Panc1 (cell line): ENCODE measurements at regions of chr16 and their contacts with region 1.

Region 1: GRCh38 chr16:4625560-4626159 is 1.0 kb downstream of the MGRN1 start:
- DNase-seq: no peak
- ATAC-seq: no peak
- H3K4me3 ChIP-seq: peak overlapping the region; percentile 84 to 92
- H3K27ac ChIP-seq: peak overlapping the region; percentile 68
- H3K4me1 ChIP-seq: peaks cover 6% of the 10 kb centered on the region
- H3K27me3 ChIP-seq: no peaks in the 10 kb centered on the region
- CTCF ChIP-seq: no peak

Region 2: DNA sequence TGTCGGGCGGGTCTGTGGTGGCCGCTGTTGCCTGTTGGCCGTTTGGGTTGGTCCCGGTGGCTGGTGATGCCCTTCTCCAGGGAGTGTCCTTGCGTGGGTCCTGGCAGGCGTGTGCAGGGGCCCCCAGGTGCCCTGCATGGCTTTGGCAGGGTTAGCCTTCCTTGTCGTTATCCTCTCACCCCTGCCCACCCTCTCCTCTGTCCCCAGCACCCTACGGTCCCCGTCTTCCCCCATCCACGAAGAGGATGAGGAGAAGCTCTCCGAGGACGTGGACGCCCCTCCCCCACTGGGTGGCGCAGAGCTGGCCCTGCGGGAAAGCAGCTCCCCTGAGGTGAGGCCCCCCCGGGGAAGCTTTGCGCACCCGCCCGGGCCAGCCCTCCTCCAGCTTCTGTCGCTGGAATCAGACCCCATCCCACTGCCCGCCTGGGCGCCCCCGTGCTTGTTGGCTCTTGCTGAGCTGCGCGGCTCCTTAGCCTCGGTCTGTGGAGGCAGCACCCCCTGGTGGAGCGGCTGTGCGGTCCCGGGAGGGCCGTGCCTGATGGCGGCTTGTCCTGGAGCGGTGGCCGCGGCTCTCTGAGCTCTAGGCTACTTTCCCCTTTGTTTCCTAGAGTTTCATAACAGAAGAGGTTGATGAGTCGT is 57.1 kb after region 1 on chr16:
- CTCF ChIA-PET with region 1: no interaction called
- POLR2A ChIA-PET with region 1: no interaction called
- in situ Hi-C with region 1: no loop called
- intact Hi-C with region 1: no loop called
- DNase-seq: no peak
- ATAC-seq: peak; percentile 63
- H3K4me3 ChIP-seq: no peak overlapping the region
- H3K27ac ChIP-seq: no peak overlapping the region
- H3K4me1 ChIP-seq: no peaks in the 10 kb centered on the region
- H3K27me3 ChIP-seq: no peaks in the 10 kb centered on the region
- CTCF ChIP-seq: no peak; the same call in 1 of the 2 replicates

Region 3: DNA sequence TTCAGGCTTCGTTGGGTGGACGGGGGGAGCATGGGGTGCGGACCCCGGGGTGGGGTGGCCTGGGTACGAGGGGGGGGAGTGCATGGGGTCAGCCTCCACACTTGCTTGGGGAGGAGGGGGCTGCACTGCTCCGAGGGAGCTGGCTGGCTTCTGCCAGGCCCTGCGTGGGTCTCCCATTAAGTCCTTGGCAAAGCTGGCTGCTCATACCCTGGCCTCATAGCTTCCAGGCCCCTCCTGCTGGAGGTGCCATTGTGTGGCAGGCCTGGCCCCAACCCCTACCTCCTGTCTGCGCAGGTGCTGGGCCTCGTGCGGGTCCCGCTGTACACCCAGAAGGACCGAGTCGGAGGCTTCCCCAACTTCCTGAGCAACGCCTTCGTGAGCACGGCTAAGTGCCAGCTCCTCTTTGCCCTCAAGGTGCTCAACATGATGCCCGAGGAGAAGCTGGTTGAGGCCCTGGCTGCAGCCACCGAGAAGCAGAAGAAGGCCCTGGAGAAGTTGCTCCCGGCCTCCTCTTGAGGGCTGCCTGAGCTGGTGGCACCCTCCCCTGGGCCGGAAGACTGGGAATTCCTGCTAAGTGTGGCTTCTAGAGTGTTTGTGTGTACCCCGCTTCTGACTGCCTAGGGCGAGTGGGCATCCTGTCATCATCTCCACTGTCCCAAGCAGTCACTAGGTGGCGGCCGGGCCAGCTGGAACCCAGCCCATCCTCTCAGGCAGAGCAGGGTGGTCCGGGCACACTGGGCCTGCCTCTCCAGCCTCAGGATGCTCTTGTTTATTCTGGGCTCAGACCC is 69.2 kb after region 1 on chr16:
- CTCF ChIA-PET with region 1: interaction called, 12 read pairs
- POLR2A ChIA-PET with region 1: no interaction called
- in situ Hi-C with region 1: no loop called
- intact Hi-C with region 1: no loop called
- DNase-seq: no peak
- ATAC-seq: 0 out of 2 replicates have a peak, but pooled peaks have one; percentile 14
- H3K4me3 ChIP-seq: peak overlapping the region; percentile 64 to 79
- H3K27ac ChIP-seq: peak overlapping the region; percentile 51; the same call in 1 of the 2 replicates
- H3K4me1 ChIP-seq: peaks cover 49% of the 10 kb centered on the region
- H3K27me3 ChIP-seq: no peaks in the 10 kb centered on the region
- CTCF ChIP-seq: no peak